ENCODE measurements at regions of chr9 and their contacts with region 1.

Region 1: DNA sequence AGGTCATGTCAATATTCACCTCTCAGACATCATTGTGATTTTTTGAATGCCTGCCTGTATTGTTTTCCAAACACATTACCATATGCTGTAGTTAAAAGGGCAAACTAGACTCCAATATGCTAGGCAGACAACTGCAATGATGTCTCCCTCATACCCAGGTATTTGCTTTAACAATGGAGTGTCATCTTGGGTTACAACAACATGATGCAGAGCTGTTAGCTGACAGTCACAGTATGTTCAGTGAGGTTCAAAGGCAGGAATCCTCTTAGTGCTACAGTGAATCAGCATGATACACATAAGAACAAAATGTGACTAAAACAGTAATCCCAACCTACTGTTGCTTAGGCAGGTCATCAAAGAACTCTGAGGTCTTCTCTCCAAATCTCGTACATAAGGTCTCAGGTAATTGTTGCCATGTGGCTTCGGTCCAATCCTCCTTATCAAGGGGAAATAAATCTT is 24.0 kb downstream of the OR1J1 start:
- DNase-seq: no peak
- ATAC-seq: no peak
- H3K4me3 ChIP-seq: no peak overlapping the region
- H3K27ac ChIP-seq: no peak overlapping the region
- H3K4me1 ChIP-seq: no peaks in the 10 kb centered on the region
- H3K27me3 ChIP-seq: no peaks in the 10 kb centered on the region
- CTCF ChIP-seq: no peak
- EP300 ChIP-seq: no peak
- POLR2A ChIP-seq: no peak
- RAD21 ChIP-seq: no peak

Region 2: GRCh38 chr9:122350638-122351355 is 102.9 kb before region 1 on chr9:
- CTCF ChIA-PET with region 1: interaction called, 4 read pairs
- POLR2A ChIA-PET with region 1: no interaction called
- RAD21 ChIA-PET with region 1: no interaction called
- SMC1A ChIA-PET with region 1: interaction called, 3 read pairs
- in situ Hi-C with region 1: no loop called
- intact Hi-C with region 1: loop called (anchors 2 kb)
- DNase-seq: no peak
- ATAC-seq: peak; percentile 98
- H3K4me3 ChIP-seq: no peak overlapping the region
- H3K27ac ChIP-seq: no peak overlapping the region
- H3K4me1 ChIP-seq: no peaks in the 10 kb centered on the region; the same call in 1 of the 2 replicates
- H3K27me3 ChIP-seq: peaks cover 2 to 8% of the 10 kb centered on the region in 2 experiments; a peak in 2 of 4 replicates
- CTCF ChIP-seq: peak; percentile 93 to 97 (median 93); a peak in 5 of 6 replicates
- EP300 ChIP-seq: no peak
- POLR2A ChIP-seq: no peak
- RAD21 ChIP-seq: peak; percentile 98

Region 3: DNA sequence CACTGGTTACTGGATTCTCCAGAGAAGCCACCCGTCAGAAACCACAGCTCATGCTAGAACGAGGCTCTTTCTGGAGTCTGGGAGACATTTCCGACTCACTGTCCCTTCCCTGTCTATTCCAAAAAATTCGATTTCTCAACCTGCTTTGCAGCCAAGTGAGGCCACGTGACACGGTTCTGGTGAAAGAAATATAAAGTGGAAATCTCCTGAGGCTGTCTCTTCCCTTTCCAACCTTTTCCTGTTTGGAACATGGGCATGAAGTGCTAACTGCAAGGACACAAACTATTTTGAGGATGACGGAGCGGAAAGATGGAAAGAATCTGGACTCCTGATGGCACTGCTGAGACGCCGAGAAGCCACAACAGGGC is 88.9 kb before region 1 on chr9:
- CTCF ChIA-PET with region 1: interaction called, 3 read pairs
- POLR2A ChIA-PET with region 1: no interaction called
- RAD21 ChIA-PET with region 1: no interaction called
- SMC1A ChIA-PET with region 1: no interaction called
- in situ Hi-C with region 1: no loop called
- intact Hi-C with region 1: loop called (anchors 5 kb)
- DNase-seq: no peak
- ATAC-seq: no peak
- H3K4me3 ChIP-seq: no peak overlapping the region
- H3K27ac ChIP-seq: no peak overlapping the region
- H3K4me1 ChIP-seq: peaks cover 11% of the 10 kb centered on the region
- H3K27me3 ChIP-seq: no peaks in the 10 kb centered on the region; a peak in 1 of 4 replicates
- CTCF ChIP-seq: no peak
- EP300 ChIP-seq: no peak
- POLR2A ChIP-seq: no peak
- RAD21 ChIP-seq: no peak

Region 4: DNA sequence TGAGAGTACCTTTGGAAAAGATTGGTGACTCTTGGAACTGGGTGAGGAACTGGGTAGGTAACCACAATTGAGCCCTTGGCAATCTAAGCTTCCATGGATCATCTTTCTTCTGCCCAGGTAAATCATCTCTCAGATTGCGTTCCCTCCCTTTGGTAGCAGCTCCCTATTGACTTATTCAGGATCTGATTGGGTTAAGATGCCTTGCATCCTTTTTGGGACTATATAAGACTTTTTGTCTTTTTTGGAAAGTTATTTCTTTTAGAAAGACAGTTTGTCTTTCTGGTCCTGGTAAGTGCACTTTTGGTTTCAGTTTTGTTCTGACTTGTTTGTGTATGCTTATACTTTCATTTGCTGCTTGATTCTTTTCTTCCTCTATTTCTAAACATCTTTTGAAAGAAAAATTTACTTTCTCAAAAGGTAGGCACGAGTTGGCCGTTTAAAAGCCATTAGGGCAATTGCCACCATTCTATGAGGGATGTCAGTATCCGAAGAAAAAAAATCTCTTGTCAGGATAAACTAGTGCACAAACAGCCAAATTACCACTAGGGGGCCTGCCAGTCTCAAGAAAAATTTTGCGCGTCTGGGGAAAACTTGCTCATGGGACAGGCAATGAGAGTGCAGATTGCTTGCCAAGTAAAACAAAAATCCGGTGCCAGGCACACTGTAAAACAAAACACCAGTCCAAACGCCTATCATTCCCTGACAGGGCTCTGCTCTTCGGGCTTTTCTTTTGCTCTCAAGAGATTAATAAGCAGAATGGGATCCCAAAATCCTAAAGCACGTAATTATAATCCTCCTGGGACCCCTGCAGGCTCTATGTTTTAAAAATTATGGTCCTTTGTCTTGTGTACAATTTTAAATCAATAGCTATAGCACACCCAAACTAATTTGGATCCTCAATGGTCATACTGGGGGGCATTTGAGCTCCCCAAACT is 11.2 kb after region 1 on chr9:
- CTCF ChIA-PET with region 1: interaction called, 26 read pairs
- POLR2A ChIA-PET with region 1: no interaction called
- RAD21 ChIA-PET with region 1: no interaction called
- SMC1A ChIA-PET with region 1: no interaction called
- in situ Hi-C with region 1: no loop called
- intact Hi-C with region 1: no loop called
- DNase-seq: peak; percentile 45
- ATAC-seq: peak; percentile 84
- H3K4me3 ChIP-seq: peak overlapping the region; percentile 54; the same call in 1 of the 2 replicates
- H3K27ac ChIP-seq: peak overlapping the region; percentile 4; the same call in 1 of the 2 replicates
- H3K4me1 ChIP-seq: no peaks in the 10 kb centered on the region
- H3K27me3 ChIP-seq: no peaks in the 10 kb centered on the region; a peak in 1 of 4 replicates
- CTCF ChIP-seq: peak; percentile 76 to 81 (median 79)
- EP300 ChIP-seq: no peak
- POLR2A ChIP-seq: no peak
- RAD21 ChIP-seq: peak; percentile 77